HEK293T (cell line): ENCODE measurements at regions of chr11 and their contacts with region 1.

Region 1: GRCh38 chr11:130002846-130003716 is 446 bp upstream of the PRDM10 start:
- DNase-seq: peak; percentile 92

Region 2: GRCh38 chr11:129992161-129992944 is 10.7 kb before region 1 on chr11:
- CTCF ChIA-PET with region 1: interaction called, 5 read pairs
- POLR2A ChIA-PET with region 1: interaction called, 21 read pairs
- DNase-seq: peak; percentile 66

Region 3: GRCh38 chr11:130031945-130032344 is 28.9 kb after region 1 on chr11:
- CTCF ChIA-PET with region 1: no interaction called
- POLR2A ChIA-PET with region 1: interaction called, 10 read pairs
- DNase-seq: no peak

Region 4: DNA sequence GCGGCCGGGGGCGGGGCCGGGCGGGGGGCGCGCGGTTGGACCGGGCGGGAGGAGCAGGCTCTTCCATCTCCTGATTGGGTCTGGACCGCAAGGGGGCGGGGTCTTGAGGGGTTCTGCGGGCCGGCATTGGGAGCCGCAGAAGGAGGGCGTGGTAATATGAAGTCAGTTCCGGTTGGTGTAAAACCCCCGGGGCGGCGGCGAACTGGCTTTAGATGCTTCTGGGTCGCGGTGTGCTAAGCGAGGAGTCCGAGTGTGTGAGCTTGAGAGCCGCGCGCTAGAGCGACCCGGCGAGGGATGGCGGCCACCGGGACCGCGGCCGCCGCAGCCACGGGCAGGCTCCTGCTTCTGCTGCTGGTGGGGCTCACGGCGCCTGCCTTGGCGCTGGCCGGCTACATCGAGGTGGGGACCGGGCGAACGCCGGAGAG is 66.6 kb after region 1 on chr11 and contains the start of gene APLP2:
- CTCF ChIA-PET with region 1: interaction called, 3 read pairs
- POLR2A ChIA-PET with region 1: interaction called, 24 read pairs
- DNase-seq: peak; percentile 95